HAP-1 (cell line): ENCODE measurements at regions of chr2 and their contacts with region 1.

Region 1: GRCh38 chr2:233566141-233566960 is at the start of gene USP40:
- DNase-seq: peak; percentile 93
- H3K4me3 ChIP-seq: peak within 1 kb of the TSS; percentile 67
- H3K4me1 ChIP-seq: peaks cover 39% of the 10 kb centered on the region
- H3K27me3 ChIP-seq: no peaks in the 10 kb centered on the region

Region 2: DNA sequence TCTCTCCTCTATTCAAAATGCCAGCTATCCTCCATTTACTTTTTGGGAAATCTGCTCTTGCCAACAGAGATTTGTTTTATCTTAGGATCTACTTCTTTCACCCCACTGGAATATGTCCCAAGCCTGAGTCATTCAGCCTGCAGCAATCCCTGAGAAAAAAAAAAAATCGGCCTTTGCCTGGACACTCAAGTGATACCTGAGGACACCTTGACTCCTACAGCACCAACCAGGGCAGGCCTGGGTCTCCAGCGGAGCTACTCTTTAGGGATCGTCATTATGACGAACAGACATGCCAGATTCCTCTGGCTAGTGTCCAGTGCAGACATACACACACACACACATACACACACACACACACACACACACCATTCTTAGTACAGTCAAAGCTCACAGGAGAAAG is 124.1 kb after region 1 on chr2:
- in situ Hi-C with region 1: loop called (anchors 10 kb)
- DNase-seq: no peak
- H3K4me3 ChIP-seq: no peak overlapping the region
- H3K4me1 ChIP-seq: peaks cover 20% of the 10 kb centered on the region
- H3K27me3 ChIP-seq: no peaks in the 10 kb centered on the region

Region 3: DNA sequence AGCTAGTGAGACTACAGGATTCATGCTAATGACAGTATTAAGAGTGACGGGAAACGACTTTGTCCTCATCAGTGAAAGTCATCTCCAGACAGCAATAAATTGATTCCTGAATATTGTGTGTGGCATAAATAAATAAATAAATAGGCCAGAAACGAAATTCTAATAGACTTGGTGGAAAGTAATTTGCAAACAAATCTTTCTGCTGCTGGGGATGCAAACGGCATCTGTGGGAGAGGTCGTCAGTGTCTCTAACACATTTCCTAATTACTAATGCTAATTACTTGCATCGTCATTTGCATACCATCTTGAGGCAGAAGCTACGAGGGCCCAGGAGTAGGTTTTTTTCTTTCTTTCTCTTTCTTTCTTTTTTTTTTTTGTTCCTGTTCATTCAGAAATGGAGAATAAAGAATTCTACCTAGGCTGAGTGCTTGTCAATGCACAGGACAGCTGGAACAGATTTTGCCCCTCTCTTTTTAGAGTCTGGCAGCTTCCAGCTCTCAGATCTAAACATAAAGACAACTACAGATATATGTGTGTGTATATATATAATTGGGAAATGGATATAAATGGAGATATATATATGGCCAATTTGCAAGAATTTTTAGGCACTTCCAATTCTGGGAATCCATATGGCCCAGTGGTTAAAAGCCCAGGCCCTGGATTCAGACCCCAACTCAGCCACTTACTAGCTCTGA is 559.2 kb after region 1 on chr2:
- in situ Hi-C with region 1: no loop called
- DNase-seq: no peak
- H3K4me3 ChIP-seq: no peak overlapping the region
- H3K4me1 ChIP-seq: no peaks in the 10 kb centered on the region
- H3K27me3 ChIP-seq: no peaks in the 10 kb centered on the region